Head of caudate nucleus (tissue), 42 donors: ENCODE measurements at regions of chr7 and their contacts with region 1.

Region 1: DNA sequence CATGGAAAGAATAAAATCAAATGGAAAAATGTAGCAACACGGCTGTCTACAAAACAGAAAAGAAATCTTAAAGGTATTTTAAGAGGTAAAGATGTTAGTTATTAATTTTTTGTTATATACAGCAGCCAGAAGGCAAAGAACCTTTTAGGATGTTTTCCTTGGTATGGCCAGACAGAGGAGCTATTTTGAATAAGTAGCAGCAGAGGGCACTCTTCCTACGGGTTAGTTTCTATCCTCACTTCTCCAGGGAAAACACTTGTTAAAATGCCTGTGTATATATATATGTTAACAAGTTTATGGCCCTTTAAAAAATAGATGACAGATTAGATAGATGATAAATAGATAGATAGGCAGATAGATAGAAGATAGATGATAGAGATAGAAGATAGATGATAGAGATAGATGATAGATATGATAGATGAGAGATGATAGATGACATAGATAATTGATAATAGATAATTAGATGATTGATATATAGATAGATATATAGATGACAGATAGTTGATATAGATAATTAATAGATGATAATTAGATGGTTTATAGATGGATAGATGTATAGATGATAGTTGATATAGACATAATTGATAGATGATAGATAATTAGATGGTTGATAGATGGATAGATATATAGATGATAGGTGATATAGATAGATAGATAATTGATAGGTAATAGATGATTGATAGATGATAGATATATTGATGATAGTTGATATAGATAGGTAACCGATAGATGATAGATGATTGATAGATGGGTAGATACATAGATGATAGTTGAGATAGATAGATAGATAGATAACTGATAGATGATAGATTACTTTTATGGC is 57.8 kb upstream of the WIPF3 start:
- DNase-seq: peak in 13 of 42 donors; percentile 17 to 60 (median 26)

Region 2: GRCh38 chr7:29921404-29922010 is 173.0 kb after region 1 on chr7:
- intact Hi-C with region 1: loop called (anchors 5 kb)
- DNase-seq: peak in 19 of 42 donors; percentile 42 to 81 (median 61)

Region 3: DNA sequence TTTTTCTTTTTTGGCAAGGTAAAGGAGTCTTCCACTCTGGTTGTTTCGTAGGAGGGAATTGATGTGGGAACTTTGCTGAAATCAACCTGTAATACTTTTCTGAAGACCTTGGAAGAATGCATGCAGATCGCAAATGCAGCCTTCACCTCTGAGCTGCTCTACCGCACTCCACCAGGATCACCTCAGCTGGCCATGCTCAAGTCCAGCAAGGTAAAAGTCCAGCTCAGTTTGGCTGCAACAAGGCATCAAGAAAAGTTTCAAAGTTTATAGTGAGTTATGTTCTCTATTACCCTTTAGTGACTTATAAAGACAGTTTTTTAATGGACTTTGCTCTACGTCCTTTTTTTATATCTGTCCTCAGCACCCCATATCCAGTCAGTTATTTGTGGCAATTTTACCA is 300.7 kb after region 1 on chr7:
- intact Hi-C with region 1: no loop called
- DNase-seq: no peak

Region 4: DNA sequence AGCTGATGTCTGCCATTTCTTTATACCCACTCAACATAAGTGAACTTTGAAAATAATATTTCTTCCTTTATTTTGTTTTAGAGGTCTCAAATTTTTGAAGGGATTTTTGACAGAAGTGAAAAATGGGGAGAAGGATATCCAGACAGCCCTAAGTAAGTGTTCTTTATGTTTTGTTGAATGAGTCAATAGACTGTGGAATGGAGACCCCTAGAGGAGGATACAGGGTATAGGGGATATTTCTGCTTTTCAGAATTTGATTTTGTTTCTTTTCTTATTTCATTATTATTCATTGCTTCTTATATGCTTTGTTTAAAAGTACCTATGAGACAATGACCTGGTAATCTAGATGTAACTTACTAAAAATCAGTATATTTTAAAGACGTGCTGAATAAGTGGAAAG is 314.1 kb after region 1 on chr7:
- intact Hi-C with region 1: loop called (anchors 10 kb)
- DNase-seq: no peak